Prostate gland (tissue), 2 donors: ENCODE measurements at regions of chr5 and their contacts with region 1.

Region 1: GRCh38 chr5:150486402-150487198 is 21.3 kb upstream of the NDST1 start:
- DNase-seq: peak; percentile 73
- H3K4me3 ChIP-seq: peak overlapping the region; percentile 94 to 98
- H3K27ac ChIP-seq: peak overlapping the region; percentile 92 to 93
- H3K4me1 ChIP-seq: peaks cover 17% of the 10 kb centered on the region
- H3K27me3 ChIP-seq: no peaks in the 10 kb centered on the region
- CTCF ChIP-seq: peak in 1 of 4 experiments; percentile 21
- POLR2A ChIP-seq: no peak

Region 2: DNA sequence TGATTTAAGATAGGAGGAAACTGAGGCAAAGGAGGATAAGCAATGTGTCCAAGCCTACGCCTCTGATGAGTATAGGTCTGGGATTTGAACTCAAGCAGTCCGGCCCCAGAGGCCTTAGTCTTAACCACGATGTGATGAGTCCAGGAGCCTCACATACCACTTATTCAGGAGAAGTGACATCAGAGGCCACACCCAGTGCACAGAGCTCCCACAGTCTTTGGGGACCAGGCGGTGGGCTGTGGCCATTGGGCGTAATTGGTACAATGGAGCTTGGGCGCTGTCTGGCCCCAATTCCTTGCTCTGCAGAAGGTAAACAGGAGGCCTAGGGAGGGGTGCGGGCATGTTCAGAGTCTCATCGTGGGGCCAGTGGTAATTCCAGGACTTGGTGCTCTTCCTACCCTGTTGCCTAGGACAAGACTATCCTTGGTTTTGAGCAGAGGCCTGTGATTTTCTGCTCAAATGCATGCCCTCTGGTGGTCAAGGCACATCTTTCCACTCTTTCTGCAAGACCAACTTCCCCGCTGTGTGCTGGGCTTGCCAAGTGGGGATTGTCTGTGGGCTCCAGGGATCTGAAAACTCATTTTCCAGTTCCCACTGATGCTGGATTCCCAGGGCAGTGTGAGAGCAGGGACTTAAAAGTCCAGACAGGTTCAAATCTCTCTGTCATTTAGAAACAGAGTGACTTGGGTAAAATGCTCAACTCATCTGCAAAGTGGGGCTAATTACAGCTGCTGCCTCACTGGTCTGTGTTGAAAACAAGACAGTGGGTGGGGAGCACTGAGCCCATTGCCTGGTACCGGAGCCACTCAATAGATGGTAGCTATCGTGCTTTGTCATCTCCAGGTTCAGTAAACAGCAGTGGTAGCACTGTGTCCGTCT is 37.1 kb after region 1 on chr5:
- intact Hi-C with region 1: loop called (anchors 5 kb)
- DNase-seq: peak; percentile 51
- H3K4me3 ChIP-seq: no peak overlapping the region
- H3K27ac ChIP-seq: no peak overlapping the region
- H3K4me1 ChIP-seq: peaks cover 3% of the 10 kb centered on the region
- H3K27me3 ChIP-seq: no peaks in the 10 kb centered on the region
- CTCF ChIP-seq: peak; percentile 42 to 66 (median 60)
- POLR2A ChIP-seq: no peak